ENCODE measurements at regions of chr5 and their contacts with region 1.

Region 1: DNA sequence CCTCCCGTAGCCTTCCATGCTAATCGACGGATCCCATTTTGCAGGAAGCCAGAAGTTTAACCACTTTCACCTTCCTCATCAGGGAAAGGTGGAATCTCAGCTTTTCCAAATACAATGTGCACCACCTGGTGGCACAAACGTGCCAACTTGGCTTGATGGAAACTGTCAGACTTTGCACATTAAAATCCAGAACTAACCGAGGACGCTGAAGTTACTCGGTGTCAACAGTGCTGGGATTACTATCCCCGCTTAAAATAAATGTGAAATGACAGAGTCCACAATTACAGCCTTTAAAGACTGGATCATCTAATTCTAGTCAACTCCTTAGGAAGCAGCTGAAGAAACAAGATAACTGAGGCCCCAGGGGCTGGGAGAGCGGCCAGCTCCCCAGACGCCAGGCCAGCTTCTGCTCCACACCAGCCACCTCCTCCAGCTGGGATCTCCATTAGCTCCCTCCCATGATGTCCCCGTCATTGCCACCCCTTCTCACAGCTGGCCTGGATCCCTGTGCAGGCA is 50.1 kb upstream of the RETREG1 start:
- DNase-seq: peak; percentile 57
- H3K4me3 ChIP-seq: no peak overlapping the region
- H3K27ac ChIP-seq: no peak overlapping the region
- H3K4me1 ChIP-seq: no peaks in the 10 kb centered on the region
- H3K27me3 ChIP-seq: no peaks in the 10 kb centered on the region
- CTCF ChIP-seq: peak; percentile 21

Region 2: GRCh38 chr5:16160706-16161105 is 506.2 kb before region 1 on chr5:
- intact Hi-C with region 1: loop called (anchors 2 kb)
- DNase-seq: peak; percentile 39
- H3K4me3 ChIP-seq: no peak overlapping the region
- H3K27ac ChIP-seq: no peak overlapping the region
- H3K4me1 ChIP-seq: no peaks in the 10 kb centered on the region
- H3K27me3 ChIP-seq: no peaks in the 10 kb centered on the region
- CTCF ChIP-seq: peak; percentile 46

Region 3: DNA sequence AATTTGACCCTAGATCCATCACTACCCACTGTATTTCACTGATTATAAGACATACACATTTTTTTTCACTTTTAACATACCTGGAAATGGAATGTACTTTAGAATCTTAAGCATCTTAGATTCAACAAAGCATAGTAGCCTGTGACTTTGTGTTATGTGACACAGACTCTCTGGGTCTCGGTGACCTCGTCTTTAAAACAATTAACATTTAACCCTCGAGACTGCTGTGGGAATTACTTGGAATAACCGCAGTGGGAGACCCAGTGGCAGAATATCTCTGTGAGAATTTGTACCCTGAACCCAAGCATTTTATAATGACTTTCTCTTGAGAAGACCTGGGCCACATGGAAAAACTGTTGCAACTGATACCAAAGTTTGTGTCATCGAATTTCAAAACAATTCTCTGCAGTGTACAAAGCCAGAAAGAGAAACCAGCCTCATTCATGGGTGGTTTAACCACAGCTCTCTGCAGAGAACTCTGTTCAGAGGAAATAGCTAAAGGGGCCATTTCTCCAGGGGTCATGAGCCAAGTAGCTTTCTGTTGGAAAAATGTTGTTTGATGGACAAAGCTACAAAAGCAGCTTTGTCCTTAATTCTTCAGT is 40.2 kb before region 1 on chr5:
- intact Hi-C with region 1: no loop called
- DNase-seq: no peak
- H3K4me3 ChIP-seq: no peak overlapping the region
- H3K27ac ChIP-seq: no peak overlapping the region
- H3K4me1 ChIP-seq: no peaks in the 10 kb centered on the region
- H3K27me3 ChIP-seq: no peaks in the 10 kb centered on the region
- CTCF ChIP-seq: no peak

Region 4: GRCh38 chr5:16855485-16855884 is 188.5 kb after region 1 on chr5:
- intact Hi-C with region 1: no loop called
- DNase-seq: no peak
- H3K4me3 ChIP-seq: no peak overlapping the region
- H3K27ac ChIP-seq: no peak overlapping the region
- H3K4me1 ChIP-seq: no peaks in the 10 kb centered on the region
- H3K27me3 ChIP-seq: no peaks in the 10 kb centered on the region
- CTCF ChIP-seq: no peak

Measured in colonic mucosa (tissue), 4 donors.